ENCODE measurements at regions of chr21 and their contacts with region 1.

Region 1: DNA sequence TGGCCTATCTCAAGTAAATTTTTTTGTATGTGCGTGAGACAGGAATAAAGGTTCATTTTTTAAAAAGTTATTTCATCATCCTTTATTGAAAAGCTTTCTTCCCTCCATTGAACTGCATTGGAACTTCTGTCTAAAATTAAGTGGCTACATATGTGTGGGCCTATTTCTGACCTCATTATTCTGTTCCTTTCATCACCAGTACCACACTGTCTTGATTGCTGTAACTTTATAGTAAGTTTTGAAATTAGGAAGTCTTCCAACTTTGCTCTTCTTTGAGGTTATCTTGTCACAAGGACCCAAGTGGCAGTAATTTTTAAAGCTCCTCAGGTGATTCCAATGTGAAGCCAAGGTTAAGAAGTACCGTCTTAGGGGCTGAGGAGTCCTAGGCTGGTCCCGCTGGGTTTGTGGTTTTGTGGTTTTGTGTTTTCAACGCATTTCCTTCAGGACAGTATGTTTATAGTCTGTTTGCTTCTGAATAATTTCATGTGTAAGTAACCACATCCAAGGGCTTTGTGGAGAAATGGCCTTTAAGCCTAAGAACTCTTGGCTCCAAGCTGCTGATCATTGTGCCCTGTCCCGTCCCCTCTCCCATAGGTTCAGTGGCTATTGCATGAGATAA is 12.4 kb upstream of the SCAF4 start:
- DNase-seq: no peak
- H3K4me3 ChIP-seq: no peak overlapping the region
- H3K27ac ChIP-seq: no peak overlapping the region
- H3K4me1 ChIP-seq: no peaks in the 10 kb centered on the region
- H3K27me3 ChIP-seq: no peaks in the 10 kb centered on the region
- CTCF ChIP-seq: no peak

Region 2: GRCh38 chr21:31397515-31397926 is 346.8 kb before region 1 on chr21:
- CTCF ChIA-PET with region 1: no interaction called
- POLR2A ChIA-PET with region 1: no interaction called
- intact Hi-C with region 1: no loop called
- DNase-seq: no peak
- H3K4me3 ChIP-seq: no peak overlapping the region
- H3K27ac ChIP-seq: no peak overlapping the region
- H3K4me1 ChIP-seq: no peaks in the 10 kb centered on the region
- H3K27me3 ChIP-seq: no peaks in the 10 kb centered on the region
- CTCF ChIP-seq: no peak

Region 3: GRCh38 chr21:31629972-31630711 is 114.1 kb before region 1 on chr21:
- CTCF ChIA-PET with region 1: no interaction called
- POLR2A ChIA-PET with region 1: no interaction called
- intact Hi-C with region 1: no loop called
- DNase-seq: peak; percentile 68 to 91
- H3K4me3 ChIP-seq: no peak overlapping the region
- H3K27ac ChIP-seq: no peak overlapping the region
- H3K4me1 ChIP-seq: peaks cover 15% of the 10 kb centered on the region
- H3K27me3 ChIP-seq: no peaks in the 10 kb centered on the region
- CTCF ChIP-seq: no peak

Region 4: GRCh38 chr21:31781737-31782136 is 37.4 kb after region 1 on chr21:
- CTCF ChIA-PET with region 1: no interaction called
- POLR2A ChIA-PET with region 1: no interaction called
- intact Hi-C with region 1: no loop called
- DNase-seq: no peak
- H3K4me3 ChIP-seq: no peak overlapping the region
- H3K27ac ChIP-seq: no peak overlapping the region
- H3K4me1 ChIP-seq: no peaks in the 10 kb centered on the region
- H3K27me3 ChIP-seq: peaks cover 8% of the 10 kb centered on the region; the same call in 1 of the 2 replicates
- CTCF ChIP-seq: no peak

Region 5: GRCh38 chr21:31850886-31851285 is 106.6 kb after region 1 on chr21:
- CTCF ChIA-PET with region 1: interaction called, 14 read pairs
- POLR2A ChIA-PET with region 1: no interaction called
- intact Hi-C with region 1: no loop called
- DNase-seq: no peak
- H3K4me3 ChIP-seq: no peak overlapping the region
- H3K27ac ChIP-seq: no peak overlapping the region
- H3K4me1 ChIP-seq: no peaks in the 10 kb centered on the region
- H3K27me3 ChIP-seq: 0 out of 2 replicates have a peak, but pooled peaks cover 5% of the 10 kb centered on the region
- CTCF ChIP-seq: no peak

Measured in PC-9 (cell line).